PC-9 (cell line): ENCODE measurements at regions of chr12 and their contacts with region 1.

Region 1: GRCh38 chr12:73083736-73084135 is 811.6 kb downstream of the TRHDE start:
- DNase-seq: no peak
- H3K4me3 ChIP-seq: no peak overlapping the region
- H3K27ac ChIP-seq: no peak overlapping the region
- H3K4me1 ChIP-seq: no peaks in the 10 kb centered on the region
- H3K27me3 ChIP-seq: no peaks in the 10 kb centered on the region
- CTCF ChIP-seq: no peak

Region 2: DNA sequence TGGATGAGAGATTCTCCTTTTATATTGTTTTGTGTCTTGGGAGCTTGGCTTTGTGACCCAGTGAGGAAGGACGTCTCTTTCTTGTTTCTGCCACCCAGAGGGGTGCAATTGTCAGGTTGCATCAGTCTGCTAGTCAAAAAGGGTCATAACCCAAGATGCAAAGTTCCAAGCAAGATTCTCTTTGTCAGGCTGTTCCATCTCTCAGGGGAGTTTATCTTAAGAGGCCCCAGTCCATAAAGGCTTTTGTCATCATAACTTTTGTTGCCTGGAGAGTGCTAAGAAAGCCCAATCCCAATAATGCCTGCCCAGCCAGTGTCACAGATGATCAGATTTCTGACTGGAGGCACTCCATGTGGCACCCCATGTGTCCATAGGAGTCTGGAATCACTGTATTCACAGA is 366.7 kb before region 1 on chr12:
- CTCF ChIA-PET with region 1: no interaction called
- POLR2A ChIA-PET with region 1: no interaction called
- intact Hi-C with region 1: no loop called
- DNase-seq: no peak
- H3K4me3 ChIP-seq: no peak overlapping the region
- H3K27ac ChIP-seq: no peak overlapping the region
- H3K4me1 ChIP-seq: no peaks in the 10 kb centered on the region
- H3K27me3 ChIP-seq: no peaks in the 10 kb centered on the region
- CTCF ChIP-seq: no peak

Region 3: GRCh38 chr12:73106296-73106695 is 22.6 kb after region 1 on chr12:
- CTCF ChIA-PET with region 1: no interaction called
- POLR2A ChIA-PET with region 1: no interaction called
- intact Hi-C with region 1: no loop called
- DNase-seq: no peak
- H3K4me3 ChIP-seq: no peak overlapping the region
- H3K27ac ChIP-seq: no peak overlapping the region
- H3K4me1 ChIP-seq: no peaks in the 10 kb centered on the region
- H3K27me3 ChIP-seq: no peaks in the 10 kb centered on the region
- CTCF ChIP-seq: no peak

Region 4: GRCh38 chr12:74105434-74105833 is 1021.7 kb after region 1 on chr12:
- CTCF ChIA-PET with region 1: no interaction called
- POLR2A ChIA-PET with region 1: no interaction called
- intact Hi-C with region 1: loop called (anchors 10 kb)
- DNase-seq: no peak
- H3K4me3 ChIP-seq: no peak overlapping the region
- H3K27ac ChIP-seq: no peak overlapping the region
- H3K4me1 ChIP-seq: no peaks in the 10 kb centered on the region
- H3K27me3 ChIP-seq: no peaks in the 10 kb centered on the region
- CTCF ChIP-seq: no peak